Keratinocyte (primary cell): ENCODE measurements at regions of chr7 and their contacts with region 1.

Region 1: DNA sequence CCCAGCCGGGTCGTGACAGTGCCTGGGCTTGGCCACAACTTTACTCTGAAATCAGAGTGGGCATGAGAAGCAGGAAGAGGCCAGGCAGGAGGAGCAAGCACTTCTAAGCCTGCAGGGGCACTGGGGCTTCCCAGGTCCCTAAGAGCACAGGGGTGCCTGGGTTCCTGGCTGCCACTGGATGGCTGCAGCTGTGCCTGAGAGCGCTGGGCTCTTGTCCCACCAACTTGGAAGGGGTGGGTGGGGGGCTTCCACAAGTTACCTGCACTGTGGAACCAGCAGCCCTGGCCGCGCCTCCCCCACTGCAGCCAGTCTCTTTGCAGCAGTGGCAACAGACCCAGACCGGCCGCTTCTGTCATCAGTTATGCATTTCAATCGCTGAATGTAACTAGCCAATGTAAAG is 434.7 kb upstream of the GRM3 start:
- DNase-seq: no peak
- H3K4me3 ChIP-seq: no peak overlapping the region
- H3K27ac ChIP-seq: no peak overlapping the region
- H3K4me1 ChIP-seq: no peaks in the 10 kb centered on the region
- H3K27me3 ChIP-seq: no peaks in the 10 kb centered on the region
- CTCF ChIP-seq: no peak

Region 2: DNA sequence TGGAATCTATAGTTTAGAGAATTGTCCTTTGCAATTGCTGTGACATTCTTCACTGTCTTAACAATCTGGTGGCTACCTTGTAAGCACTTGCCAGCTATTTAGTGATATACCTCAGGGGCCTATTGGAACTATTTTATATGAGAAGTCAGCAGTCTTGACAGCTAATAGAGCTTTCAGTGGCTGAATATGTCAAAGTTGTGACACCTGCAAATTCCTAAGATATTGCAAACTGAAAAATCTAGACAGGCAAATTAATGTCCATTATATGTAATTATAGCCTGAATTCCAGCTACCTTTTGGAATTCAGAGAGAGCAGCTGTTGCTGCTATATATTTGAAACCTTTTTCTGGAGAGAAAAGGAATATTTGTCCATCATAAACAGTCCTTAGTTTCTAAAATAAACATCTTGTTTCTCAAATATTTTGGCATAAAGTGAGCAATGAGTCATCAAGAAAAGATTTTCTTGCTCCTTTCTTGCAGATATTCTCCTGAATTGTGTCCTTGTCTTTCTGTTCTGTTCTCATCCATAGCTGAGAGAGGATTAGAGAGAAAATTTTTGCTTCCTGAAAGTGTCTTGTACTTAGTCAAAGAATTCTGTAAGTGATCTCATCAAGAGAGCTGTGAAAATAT is 613.3 kb before region 1 on chr7:
- dilution Hi-C with region 1: no loop called
- DNase-seq: no peak
- H3K4me3 ChIP-seq: no peak overlapping the region
- H3K27ac ChIP-seq: no peak overlapping the region
- H3K4me1 ChIP-seq: no peaks in the 10 kb centered on the region
- H3K27me3 ChIP-seq: no peaks in the 10 kb centered on the region
- CTCF ChIP-seq: no peak

Region 3: GRCh38 chr7:86123476-86123875 is 85.6 kb before region 1 on chr7:
- dilution Hi-C with region 1: loop called (anchors 25 kb)
- DNase-seq: no peak
- H3K4me3 ChIP-seq: no peak overlapping the region
- H3K27ac ChIP-seq: no peak overlapping the region
- H3K4me1 ChIP-seq: no peaks in the 10 kb centered on the region
- H3K27me3 ChIP-seq: no peaks in the 10 kb centered on the region
- CTCF ChIP-seq: no peak